Naive thymus-derived CD8-positive, alpha-beta T cell (primary cell): ENCODE measurements at regions of chr7 and their contacts with region 1.

Region 1: DNA sequence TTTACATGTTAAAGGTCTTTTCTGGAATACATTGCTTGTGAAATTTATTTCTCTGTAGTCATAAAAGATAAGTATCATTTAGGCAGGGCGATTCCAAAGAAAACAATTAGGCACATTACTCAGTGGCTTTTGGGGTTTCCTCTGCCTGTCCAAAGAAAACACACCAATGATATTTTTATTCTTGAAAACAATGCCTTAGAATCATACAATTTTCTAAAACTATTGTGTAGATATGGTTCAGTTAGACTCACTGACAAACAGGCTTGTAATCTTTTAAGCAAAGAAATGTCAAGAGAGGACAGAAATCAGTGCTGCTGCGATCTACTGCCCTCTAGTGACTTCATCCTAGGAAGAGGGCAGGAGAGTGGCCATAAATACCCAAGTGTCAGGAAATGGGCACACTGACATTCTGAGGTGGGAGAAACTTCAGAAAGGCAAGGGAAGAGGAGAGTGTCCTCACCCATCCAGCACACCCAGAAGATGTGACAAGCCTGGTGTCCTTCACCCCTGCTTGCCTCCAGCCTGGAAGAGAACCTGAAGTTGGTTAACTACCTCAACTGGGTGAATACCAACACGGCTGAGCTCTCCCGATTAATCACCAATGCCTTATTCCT is 120.5 kb downstream of the GALNT11 start:
- DNase-seq: peak in 6 of 10 donors; percentile 31 to 54 (median 43)
- ATAC-seq: peak; percentile 28 to 35
- H3K4me3 Mint-ChIP-seq: peak overlapping the region in 7 of 10 donors; percentile 21 to 69 (median 58)
- H3K27ac Mint-ChIP-seq: peak overlapping the region; percentile 58 to 95 (median 87)
- H3K4me1 Mint-ChIP-seq: peaks cover 31 to 50% (median 48%) of the 10 kb centered on the region in 4 donors
- H3K27me3 Mint-ChIP-seq: no peaks in the 10 kb centered on the region

Region 2: DNA sequence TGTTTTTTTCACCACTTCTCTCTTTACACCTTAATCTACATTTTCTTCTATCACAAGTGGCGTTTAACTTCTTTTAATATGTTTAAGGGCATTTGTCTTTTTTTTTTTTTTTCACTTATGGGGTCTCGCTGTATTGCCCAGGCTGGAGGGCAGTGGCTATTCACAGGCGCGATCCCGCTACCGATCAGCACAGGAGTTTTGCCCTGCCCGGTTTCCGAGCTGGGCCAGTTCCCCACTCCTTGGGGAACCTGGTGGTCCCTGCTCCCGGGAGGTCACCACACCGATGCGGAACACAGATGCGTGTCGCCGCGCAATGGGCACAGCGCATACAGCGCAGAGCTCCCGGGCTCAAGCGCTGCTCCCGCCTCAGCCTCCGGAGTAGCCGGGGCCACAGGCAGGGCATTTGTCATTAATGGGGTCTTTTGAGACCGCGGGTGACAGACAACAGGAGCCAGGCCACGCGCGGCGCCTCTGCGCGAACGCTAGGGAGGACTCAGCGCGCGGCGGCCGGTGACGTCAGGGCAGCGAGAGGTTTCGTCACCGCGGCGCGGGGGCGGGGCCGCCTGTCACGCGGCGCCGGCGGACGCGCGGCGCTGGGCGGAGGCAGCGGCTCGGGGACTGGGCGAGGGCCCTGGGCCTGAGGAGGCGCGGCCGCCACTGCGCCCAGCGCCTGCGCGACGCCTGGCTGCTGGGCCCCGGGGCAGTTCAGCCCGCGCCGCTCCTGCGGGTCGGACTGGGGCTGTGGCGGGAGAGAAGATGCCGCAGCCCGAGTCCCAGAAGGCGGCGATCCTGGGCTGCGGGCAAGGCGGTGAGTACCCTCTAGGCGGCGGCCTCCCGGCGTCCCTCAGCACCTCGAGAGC is 120.7 kb before region 1 on chr7 and contains the start of gene GALNT11:
- POLR2A ChIA-PET with region 1: interaction called, 20 read pairs
- DNase-seq: peak; percentile 78 to 92 (median 90)
- ATAC-seq: peak; percentile 80 to 86
- H3K4me3 Mint-ChIP-seq: peak within 1 kb of the TSS; percentile 86 to 93 (median 91)
- H3K27ac Mint-ChIP-seq: peak within 1 kb of the TSS; percentile 85 to 98 (median 98)
- H3K4me1 Mint-ChIP-seq: peaks cover 15 to 45% (median 44%) of the 10 kb centered on the region in 4 donors
- H3K27me3 Mint-ChIP-seq: peaks cover 0 to 3% (median 0%) of the 10 kb centered on the region in 5 donors
- polyA plus RNA-seq, gene GALNT11: 52.1 to 58.3 (median 53.7) TPM

Region 3: DNA sequence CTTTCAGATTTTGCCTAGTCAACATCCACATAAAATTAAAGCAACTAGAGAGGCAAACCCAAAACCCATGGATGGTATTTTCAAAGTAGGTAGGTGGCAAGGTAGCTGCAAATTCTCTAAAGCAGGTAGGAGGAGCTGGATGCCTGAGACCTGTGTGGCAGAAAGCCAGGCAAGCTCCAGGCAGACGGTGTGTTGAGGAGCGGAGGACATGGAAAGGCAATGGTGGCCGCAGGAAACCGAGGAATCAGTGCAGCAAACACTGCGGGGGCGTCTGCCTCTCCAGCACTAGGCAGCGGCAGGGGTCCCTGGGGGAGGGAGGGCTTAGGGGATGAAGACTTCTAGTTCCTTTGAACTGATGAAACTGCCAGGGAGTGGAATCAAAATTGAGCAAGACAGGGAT is 19.2 kb before region 1 on chr7:
- POLR2A ChIA-PET with region 1: interaction called, 10 read pairs
- DNase-seq: no peak
- ATAC-seq: no peak
- H3K4me3 Mint-ChIP-seq: no peak overlapping the region
- H3K27ac Mint-ChIP-seq: peak overlapping the region in 4 of 10 donors; percentile 41 to 90 (median 85)
- H3K4me1 Mint-ChIP-seq: peaks cover 11 to 18% (median 12%) of the 10 kb centered on the region in 4 donors
- H3K27me3 Mint-ChIP-seq: no peaks in the 10 kb centered on the region